ENCODE measurements at regions of chr6 and their contacts with region 1.

Region 1: GRCh38 chr6:129498950-129499842 is 210.8 kb downstream of the ARHGAP18 start:
- DNase-seq: peak; percentile 73
- H3K4me3 ChIP-seq: peak overlapping the region in 1 of 3 experiments; percentile 13
- H3K27ac ChIP-seq: no peak overlapping the region
- H3K4me1 ChIP-seq: peaks cover 34% of the 10 kb centered on the region
- H3K27me3 ChIP-seq: no peaks in the 10 kb centered on the region
- CTCF ChIP-seq: peak; percentile 21 to 36
- POLR2A ChIP-seq: no peak

Region 2: GRCh38 chr6:129510950-129511349 is 11.8 kb after region 1 on chr6:
- CTCF ChIA-PET with region 1: interaction called, 18 read pairs
- POLR2A ChIA-PET with region 1: no interaction called
- dilution Hi-C with region 1: no loop called
- intact Hi-C with region 1: no loop called
- DNase-seq: peak; percentile 28
- H3K4me3 ChIP-seq: no peak overlapping the region
- H3K27ac ChIP-seq: no peak overlapping the region
- H3K4me1 ChIP-seq: peaks cover 2% of the 10 kb centered on the region
- H3K27me3 ChIP-seq: no peaks in the 10 kb centered on the region
- CTCF ChIP-seq: no peak
- POLR2A ChIP-seq: no peak

Region 3: GRCh38 chr6:129567374-129567773 is 68.2 kb after region 1 on chr6:
- CTCF ChIA-PET with region 1: interaction called, 52 read pairs
- POLR2A ChIA-PET with region 1: no interaction called
- dilution Hi-C with region 1: no loop called
- intact Hi-C with region 1: loop called (anchors 2 kb)
- DNase-seq: no peak
- H3K4me3 ChIP-seq: no peak overlapping the region
- H3K27ac ChIP-seq: no peak overlapping the region
- H3K4me1 ChIP-seq: no peaks in the 10 kb centered on the region
- H3K27me3 ChIP-seq: no peaks in the 10 kb centered on the region
- CTCF ChIP-seq: peak; percentile 30 to 32
- POLR2A ChIP-seq: no peak

Region 4: GRCh38 chr6:129598244-129599187 is 99.3 kb after region 1 on chr6:
- CTCF ChIA-PET with region 1: interaction called, 20 read pairs
- POLR2A ChIA-PET with region 1: no interaction called
- dilution Hi-C with region 1: no loop called
- intact Hi-C with region 1: no loop called
- DNase-seq: peak; percentile 87
- H3K4me3 ChIP-seq: no peak overlapping the region
- H3K27ac ChIP-seq: peak overlapping the region; percentile 32
- H3K4me1 ChIP-seq: peaks cover 5% of the 10 kb centered on the region
- H3K27me3 ChIP-seq: no peaks in the 10 kb centered on the region
- CTCF ChIP-seq: peak; percentile 41 to 47
- POLR2A ChIP-seq: peak; percentile 19

Region 5: GRCh38 chr6:129774697-129775447 is 275.7 kb after region 1 on chr6:
- CTCF ChIA-PET with region 1: interaction called, 15 read pairs
- POLR2A ChIA-PET with region 1: no interaction called
- dilution Hi-C with region 1: no loop called
- intact Hi-C with region 1: loop called (anchors 1 kb)
- DNase-seq: peak; percentile 76
- H3K4me3 ChIP-seq: no peak overlapping the region
- H3K27ac ChIP-seq: no peak overlapping the region
- H3K4me1 ChIP-seq: no peaks in the 10 kb centered on the region
- H3K27me3 ChIP-seq: no peaks in the 10 kb centered on the region
- CTCF ChIP-seq: peak; percentile 91 to 96
- POLR2A ChIP-seq: no peak

Region 6: DNA sequence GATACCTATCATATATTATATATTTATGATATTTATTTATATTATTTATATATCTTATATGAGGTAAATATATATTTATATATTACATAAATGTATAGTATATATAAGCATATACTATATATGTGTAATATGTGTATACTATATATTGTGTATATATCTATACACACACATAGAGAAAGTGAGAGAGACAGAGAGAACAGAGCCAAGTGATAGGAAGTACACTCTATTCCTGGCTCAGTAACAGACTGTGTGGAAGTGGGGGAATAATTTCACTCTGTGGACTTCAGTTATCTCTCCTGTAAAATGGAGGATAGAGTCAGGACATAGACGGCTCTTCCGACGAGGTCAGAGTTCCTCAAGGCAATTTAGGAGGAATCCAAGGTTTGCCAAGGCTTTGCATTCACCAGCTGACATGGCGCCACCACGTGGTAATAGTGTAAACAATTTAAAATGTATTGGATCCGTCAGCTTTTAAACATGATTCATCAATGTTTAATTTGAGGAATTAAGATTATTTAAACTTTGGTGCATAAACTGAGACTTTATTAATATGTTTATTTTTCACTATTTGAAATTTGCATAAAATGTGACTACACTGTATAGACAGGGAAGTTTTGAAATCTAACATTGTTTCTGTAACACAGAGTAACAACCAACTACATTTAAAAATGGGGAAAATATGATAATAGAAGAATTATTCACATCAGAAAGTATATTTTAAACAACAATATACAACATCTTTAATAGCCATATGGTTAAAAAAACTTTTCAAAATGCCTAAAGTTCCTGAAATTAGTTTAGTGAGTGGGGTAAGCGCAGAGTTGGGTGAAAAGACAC is 437.4 kb after region 1 on chr6:
- CTCF ChIA-PET with region 1: interaction called, 16 read pairs
- POLR2A ChIA-PET with region 1: no interaction called
- dilution Hi-C with region 1: no loop called
- intact Hi-C with region 1: loop called (anchors 1 kb)
- DNase-seq: peak; percentile 73
- H3K4me3 ChIP-seq: peak overlapping the region in 1 of 3 experiments; percentile 30
- H3K27ac ChIP-seq: no peak overlapping the region
- H3K4me1 ChIP-seq: peaks cover 2% of the 10 kb centered on the region
- H3K27me3 ChIP-seq: no peaks in the 10 kb centered on the region
- CTCF ChIP-seq: peak; percentile 39 to 56
- POLR2A ChIP-seq: no peak

Measured in endothelial cell of umbilical vein (primary cell).